ENCODE measurements at regions of chr17 and their contacts with region 1.

Region 1: DNA sequence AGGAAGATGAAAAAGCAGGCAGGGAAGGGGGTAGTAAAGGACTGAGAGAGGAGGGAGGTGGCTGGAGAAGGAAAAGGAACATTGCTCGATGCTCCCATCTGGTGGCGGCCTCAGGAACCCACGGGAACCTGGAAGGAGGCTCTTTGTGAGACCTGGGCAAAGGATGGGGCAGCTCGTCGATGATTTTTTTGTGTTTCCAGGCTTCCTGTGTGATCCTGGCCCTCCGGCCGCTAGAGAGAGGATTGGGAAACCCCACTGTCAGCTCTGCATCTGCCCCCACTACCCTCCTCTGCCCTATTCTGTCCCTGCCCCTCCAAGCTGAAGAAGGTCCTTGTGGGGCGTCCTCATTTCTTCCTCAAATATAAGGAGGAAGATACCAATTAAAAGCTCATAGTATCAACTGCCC is 6.6 kb downstream of the WFIKKN2 start:
- DNase-seq: no peak
- ATAC-seq: peak; percentile 90
- H3K4me3 ChIP-seq: no peak overlapping the region
- H3K27ac ChIP-seq: no peak overlapping the region
- H3K4me1 ChIP-seq: no peaks in the 10 kb centered on the region
- H3K27me3 ChIP-seq: no peaks in the 10 kb centered on the region; a peak in 2 of 4 replicates
- CTCF ChIP-seq: peak; percentile 74 to 88 (median 83); a peak in 5 of 6 replicates
- EP300 ChIP-seq: no peak
- POLR2A ChIP-seq: no peak
- RAD21 ChIP-seq: peak; percentile 85

Region 2: GRCh38 chr17:50816771-50817751 is 24.9 kb before region 1 on chr17:
- CTCF ChIA-PET with region 1: interaction called, 30 read pairs
- POLR2A ChIA-PET with region 1: no interaction called
- RAD21 ChIA-PET with region 1: interaction called, 3 read pairs
- SMC1A ChIA-PET with region 1: interaction called, 9 read pairs
- in situ Hi-C with region 1: no loop called
- intact Hi-C with region 1: no loop called
- DNase-seq: no peak
- ATAC-seq: peak; percentile 84
- H3K4me3 ChIP-seq: no peak overlapping the region
- H3K27ac ChIP-seq: no peak overlapping the region
- H3K4me1 ChIP-seq: no peaks in the 10 kb centered on the region; the same call in 1 of the 2 replicates
- H3K27me3 ChIP-seq: no peaks in the 10 kb centered on the region; a peak in 1 of 4 replicates
- CTCF ChIP-seq: peak; percentile 52 to 83 (median 75)
- EP300 ChIP-seq: no peak
- POLR2A ChIP-seq: no peak
- RAD21 ChIP-seq: peak; percentile 55

Region 3: DNA sequence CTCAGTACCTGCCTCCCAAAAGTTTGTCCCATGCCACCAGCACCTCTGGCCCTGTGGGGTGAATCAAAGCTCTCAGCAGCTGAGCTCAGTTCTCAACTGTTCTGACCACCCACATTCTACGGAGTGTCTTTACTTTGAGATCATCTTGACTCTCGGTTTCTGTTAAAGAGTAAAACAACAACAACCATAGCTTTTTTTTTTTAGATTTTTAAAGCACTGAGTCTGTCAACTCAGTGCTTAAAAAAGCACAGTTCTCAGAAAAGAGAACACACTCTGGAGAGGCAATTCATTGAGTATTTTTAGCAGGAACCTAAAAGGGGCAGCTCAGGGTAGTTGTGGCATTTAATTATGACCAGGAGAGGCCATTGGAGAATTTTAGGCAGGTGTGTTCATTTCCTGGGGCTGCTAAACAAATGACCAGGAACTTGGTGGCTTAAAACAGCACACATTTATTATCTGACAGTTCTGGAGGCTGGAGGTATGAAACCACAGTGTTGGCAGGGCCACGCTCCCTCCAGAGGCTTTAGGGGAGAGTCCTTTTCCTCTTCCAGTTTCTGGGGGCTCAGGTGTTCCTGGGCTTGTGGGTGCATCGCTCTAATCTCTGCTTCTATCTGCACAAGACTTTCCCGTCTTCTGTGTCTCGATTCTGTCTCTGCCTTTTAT is 13.3 kb before region 1 on chr17:
- CTCF ChIA-PET with region 1: interaction called, 16 read pairs
- POLR2A ChIA-PET with region 1: interaction called, 3 read pairs
- RAD21 ChIA-PET with region 1: interaction called, 3 read pairs
- SMC1A ChIA-PET with region 1: interaction called, 3 read pairs
- in situ Hi-C with region 1: no loop called
- intact Hi-C with region 1: no loop called
- DNase-seq: peak; percentile 35
- ATAC-seq: peak; percentile 89
- H3K4me3 ChIP-seq: peak overlapping the region; percentile 17; the same call in 1 of the 2 replicates
- H3K27ac ChIP-seq: peak overlapping the region; percentile 79
- H3K4me1 ChIP-seq: peaks cover 25% of the 10 kb centered on the region
- H3K27me3 ChIP-seq: no peaks in the 10 kb centered on the region
- CTCF ChIP-seq: no peak
- EP300 ChIP-seq: peak; percentile 25 to 45; a peak in 1 of 4 replicates
- POLR2A ChIP-seq: peak; percentile 42; the same call in 1 of the 2 replicates
- RAD21 ChIP-seq: no peak